Gastrocnemius medialis (tissue), 4 donors: ENCODE measurements at regions of chr7 and their contacts with region 1.

Region 1: DNA sequence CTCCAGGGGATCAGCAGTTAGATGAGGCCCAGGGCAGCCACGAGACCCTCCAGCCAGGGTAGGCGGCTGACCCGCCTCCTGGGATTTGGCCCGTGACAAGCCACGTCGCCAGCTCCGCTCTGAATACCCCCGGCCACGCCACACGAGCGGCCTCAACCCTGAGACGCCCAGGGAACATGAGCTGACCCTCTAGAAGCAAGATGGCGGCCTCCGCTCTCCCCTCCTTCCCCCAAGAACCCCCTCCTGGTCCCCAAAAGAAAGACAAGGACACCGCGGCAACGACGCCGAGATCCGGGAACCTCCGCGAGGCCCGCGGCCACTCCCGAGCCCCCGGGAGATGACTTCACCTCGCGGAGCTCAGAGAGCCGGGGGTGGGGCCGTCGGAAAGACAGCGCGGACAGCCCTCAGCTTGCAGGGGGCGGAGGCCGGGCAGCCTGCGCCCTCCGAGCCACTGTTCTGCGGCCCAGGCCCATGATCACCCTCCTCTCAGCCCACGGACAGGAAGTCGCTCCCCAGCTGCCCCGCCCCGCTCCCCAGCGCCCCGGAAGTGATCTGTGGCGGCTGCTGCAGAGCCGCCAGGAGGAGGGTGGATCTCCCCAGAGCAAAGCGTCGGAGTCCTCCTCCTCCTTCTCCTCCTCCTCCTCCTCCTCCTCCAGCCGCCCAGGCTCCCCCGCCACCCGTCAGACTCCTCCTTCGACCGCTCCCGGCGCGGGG is at the start of gene RALA:
- DNase-seq: peak; percentile 89
- ATAC-seq: peak; percentile 94
- H3K4me3 ChIP-seq: peak within 1 kb of the TSS; percentile 78 to 98 (median 87)
- H3K27ac ChIP-seq: peak within 1 kb of the TSS; percentile 89 to 95 (median 92)
- H3K4me1 ChIP-seq: peaks cover 45 to 48% of the 10 kb centered on the region in 2 donors
- H3K27me3 ChIP-seq: no peaks in the 10 kb centered on the region
- CTCF ChIP-seq: no peak
- POLR2A ChIP-seq: peak; percentile 74 to 83
- total RNA-seq, gene RALA: 9.2 to 11.6 (median 10.7) TPM

Region 2: GRCh38 chr7:39566023-39566921 is 56.9 kb before region 1 on chr7 and contains the start of gene YAE1:
- in situ Hi-C with region 1: no loop called
- intact Hi-C with region 1: loop called (anchors 2 kb)
- DNase-seq: peak; percentile 56 to 62
- ATAC-seq: peak; percentile 94 to 96
- H3K4me3 ChIP-seq: peak within 1 kb of the TSS; percentile 79 to 90 (median 86)
- H3K27ac ChIP-seq: peak within 1 kb of the TSS; percentile 59 to 83 (median 77)
- H3K4me1 ChIP-seq: peaks cover 8 to 18% of the 10 kb centered on the region in 2 donors
- H3K27me3 ChIP-seq: no peaks in the 10 kb centered on the region
- CTCF ChIP-seq: no peak
- POLR2A ChIP-seq: peak; percentile 35 to 37
- total RNA-seq, gene YAE1: 4.6 to 20.2 (median 10.2) TPM

Region 3: DNA sequence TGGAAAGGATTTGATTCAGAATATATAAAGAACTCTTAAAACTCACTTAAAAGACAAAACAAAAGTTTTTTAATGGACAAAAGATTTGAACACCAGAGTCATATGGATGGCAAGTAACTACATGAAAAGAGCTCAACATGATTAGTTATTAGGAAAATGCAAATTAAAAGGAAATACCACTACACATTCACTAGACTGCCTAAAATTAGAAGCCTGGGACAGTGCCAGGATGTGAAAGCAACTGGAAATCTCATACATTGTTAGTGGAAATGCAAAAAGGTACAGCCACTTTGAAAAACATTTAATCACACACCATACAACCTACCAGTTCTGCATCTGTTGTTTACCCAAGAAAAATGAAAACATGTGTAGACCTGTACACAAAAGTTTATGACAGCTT is 49.0 kb after region 1 on chr7:
- in situ Hi-C with region 1: no loop called
- intact Hi-C with region 1: loop called (anchors 5 kb)
- DNase-seq: no peak
- ATAC-seq: no peak
- H3K4me3 ChIP-seq: no peak overlapping the region
- H3K27ac ChIP-seq: no peak overlapping the region
- H3K4me1 ChIP-seq: peaks cover 26 to 28% of the 10 kb centered on the region in 2 donors
- H3K27me3 ChIP-seq: no peaks in the 10 kb centered on the region
- CTCF ChIP-seq: no peak
- POLR2A ChIP-seq: no peak